AG04450 (cell line): ENCODE measurements at regions of chr5 and their contacts with region 1.

Region 1: DNA sequence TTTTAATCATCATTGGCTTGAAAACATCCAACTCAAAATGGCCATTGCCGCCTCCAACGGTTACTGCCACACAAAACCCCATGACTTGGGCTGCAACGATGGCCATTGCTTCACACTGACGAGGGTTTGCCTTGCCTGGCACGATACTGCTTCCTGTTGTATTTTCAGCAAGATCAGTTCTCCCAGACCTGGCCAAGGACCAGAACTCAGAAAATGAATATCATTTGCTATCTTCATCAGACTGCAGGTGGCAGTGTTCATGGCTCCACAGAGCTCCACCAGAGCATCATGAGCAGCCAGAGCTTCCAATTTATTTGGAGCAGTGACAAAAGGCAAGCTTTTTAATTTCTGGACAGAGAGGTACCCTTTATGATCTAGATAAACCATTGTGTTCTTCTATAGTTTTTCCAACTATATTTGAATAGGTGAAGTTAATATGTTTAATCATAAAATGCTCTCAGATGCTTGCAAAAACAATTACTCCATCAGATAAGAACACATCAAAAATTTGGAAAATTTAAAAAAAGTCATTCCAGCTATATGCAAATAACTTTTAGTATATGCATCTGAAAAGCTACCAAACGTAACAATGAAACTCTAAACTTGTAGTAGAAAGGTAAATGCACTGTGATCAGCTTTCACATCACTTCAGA is 10.4 kb downstream of the AMACR start:
- DNase-seq: peak; percentile 65
- H3K4me3 ChIP-seq: no peak overlapping the region
- H3K27ac ChIP-seq: no peak overlapping the region
- H3K27me3 ChIP-seq: no peaks in the 10 kb centered on the region
- CTCF ChIP-seq: peak; percentile 81

Region 2: GRCh38 chr5:33556330-33557328 is 440.8 kb before region 1 on chr5:
- CTCF ChIA-PET with region 1: no interaction called
- POLR2A ChIA-PET with region 1: no interaction called
- DNase-seq: no peak
- H3K4me3 ChIP-seq: no peak overlapping the region
- H3K27ac ChIP-seq: no peak overlapping the region
- H3K27me3 ChIP-seq: no peaks in the 10 kb centered on the region
- CTCF ChIP-seq: no peak

Region 3: DNA sequence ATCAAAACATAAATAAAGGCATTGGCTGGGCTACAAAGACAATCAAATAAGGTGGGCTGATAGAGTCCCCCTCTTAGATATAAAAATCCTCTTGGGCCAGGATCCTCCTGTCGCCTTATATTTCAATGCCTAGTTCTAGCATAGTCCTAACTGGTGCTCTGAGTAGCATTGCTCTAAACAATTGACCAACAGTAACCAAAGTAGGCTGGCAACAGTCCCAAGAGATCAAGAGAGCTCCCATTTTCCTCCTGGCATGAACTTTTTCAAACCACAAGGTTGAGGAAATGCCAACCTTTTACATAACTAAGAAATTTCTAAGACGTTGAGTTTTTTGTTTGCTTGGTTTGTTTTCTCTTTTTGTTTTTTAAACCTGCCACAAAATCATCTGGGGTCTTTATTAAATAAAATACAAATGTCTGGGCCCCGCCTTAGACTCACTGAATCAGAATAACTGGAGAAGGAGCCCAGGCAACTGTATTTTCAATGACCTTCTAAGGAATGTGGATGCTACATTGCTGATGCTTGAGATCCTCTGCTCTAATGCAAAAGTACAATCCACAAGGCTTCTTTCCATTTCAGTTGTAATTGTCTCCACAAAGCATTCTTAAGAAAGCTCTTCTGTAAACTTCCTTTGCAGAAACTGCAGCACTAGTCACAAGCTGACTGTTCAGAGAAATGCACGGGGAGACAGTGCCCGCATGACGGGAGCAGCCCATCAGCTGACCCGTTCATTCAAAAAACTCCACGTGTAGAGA is 15.9 kb before region 1 on chr5:
- CTCF ChIA-PET with region 1: interaction called, 13 read pairs
- POLR2A ChIA-PET with region 1: no interaction called
- DNase-seq: no peak
- H3K4me3 ChIP-seq: no peak overlapping the region
- H3K27ac ChIP-seq: no peak overlapping the region
- H3K27me3 ChIP-seq: no peaks in the 10 kb centered on the region
- CTCF ChIP-seq: no peak

Region 4: DNA sequence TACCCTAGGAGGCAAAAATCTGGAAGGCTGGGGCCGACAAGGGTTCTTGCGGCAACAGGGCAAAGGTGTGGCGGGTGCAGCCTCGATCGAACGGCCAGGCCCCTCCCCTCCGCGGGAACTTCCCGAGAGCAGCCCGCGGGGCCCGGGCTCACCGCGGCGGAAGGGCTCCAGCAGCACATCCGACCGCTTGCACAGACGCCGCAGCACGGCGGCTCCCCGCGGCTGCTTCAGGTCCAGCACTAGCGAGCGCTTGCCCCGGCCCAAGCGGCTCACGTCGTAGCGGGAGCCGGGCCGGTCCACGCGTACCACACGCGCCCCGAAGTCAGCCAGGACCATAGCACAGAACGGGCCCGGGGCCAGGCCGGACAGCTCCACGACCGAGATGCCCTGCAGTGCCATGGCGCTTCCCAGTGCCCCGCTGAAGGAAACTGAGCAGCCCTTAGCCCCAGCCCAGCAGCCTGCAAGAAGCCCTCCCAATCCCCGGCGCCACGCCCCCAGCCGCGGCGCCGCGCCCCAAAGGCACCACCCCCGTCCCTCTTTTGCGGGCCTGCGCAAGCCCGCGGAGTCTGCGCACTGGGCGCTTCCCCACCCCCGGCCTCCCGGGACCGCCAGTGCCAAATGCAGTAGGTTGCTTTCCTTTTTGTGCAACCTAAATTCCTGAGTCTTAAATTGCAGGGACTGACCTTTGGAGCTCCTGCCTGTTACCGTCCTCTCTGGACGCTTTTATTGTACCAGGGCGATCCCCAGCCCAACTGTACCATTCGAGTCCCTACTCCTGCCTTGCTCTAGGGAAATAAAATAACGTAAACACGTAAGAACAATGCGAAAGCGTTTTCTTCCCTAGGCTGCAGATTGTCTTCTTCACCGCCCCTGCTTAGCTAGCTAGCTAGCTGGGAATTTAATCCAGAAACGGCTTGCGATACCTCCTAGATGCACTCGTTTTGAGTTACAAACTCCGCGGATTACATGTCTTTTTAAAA is 10.5 kb after region 1 on chr5 and contains the start of gene AMACR:
- CTCF ChIA-PET with region 1: interaction called, 18 read pairs
- POLR2A ChIA-PET with region 1: interaction called, 4 read pairs
- DNase-seq: peak; percentile 72
- H3K4me3 ChIP-seq: peak within 1 kb of the TSS; percentile 77
- H3K27ac ChIP-seq: peak within 1 kb of the TSS; percentile 88
- H3K27me3 ChIP-seq: no peaks in the 10 kb centered on the region
- CTCF ChIP-seq: 0 out of 2 replicates have a peak, but pooled peaks have one; percentile 12
- polyA plus RNA-seq, gene AMACR: 8.0 and 10.0 TPM in 2 replicates

Region 5: GRCh38 chr5:34062419-34062818 is 65.0 kb after region 1 on chr5:
- CTCF ChIA-PET with region 1: no interaction called
- POLR2A ChIA-PET with region 1: no interaction called
- DNase-seq: no peak
- H3K4me3 ChIP-seq: no peak overlapping the region
- H3K27ac ChIP-seq: no peak overlapping the region
- H3K27me3 ChIP-seq: no peaks in the 10 kb centered on the region
- CTCF ChIP-seq: no peak

Region 6: GRCh38 chr5:34452170-34452830 is 454.8 kb after region 1 on chr5:
- CTCF ChIA-PET with region 1: interaction called, 44 read pairs
- POLR2A ChIA-PET with region 1: no interaction called
- DNase-seq: peak; percentile 10
- H3K4me3 ChIP-seq: no peak overlapping the region
- H3K27ac ChIP-seq: no peak overlapping the region
- H3K27me3 ChIP-seq: peaks cover 18% of the 10 kb centered on the region
- CTCF ChIP-seq: peak; percentile 70

Region 7: DNA sequence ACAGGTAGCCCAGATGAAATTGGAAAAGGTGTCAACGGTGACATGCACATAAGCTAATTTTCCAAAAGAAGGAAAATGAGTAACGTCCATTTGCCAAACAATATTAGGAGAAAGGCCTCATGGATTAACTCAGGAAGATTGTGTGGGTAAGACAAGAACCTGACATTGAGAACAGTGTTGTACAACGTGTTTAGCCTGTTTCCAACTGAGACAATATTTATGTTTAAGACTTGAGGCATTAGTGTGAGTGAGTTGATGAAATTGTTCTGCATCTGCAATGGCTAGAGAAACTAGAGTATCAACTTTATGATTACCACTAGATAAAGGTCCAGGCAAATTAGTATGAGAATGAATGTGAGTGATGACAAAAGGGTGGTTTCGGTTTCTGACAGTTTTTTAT is 467.4 kb after region 1 on chr5:
- CTCF ChIA-PET with region 1: interaction called, 15 read pairs
- POLR2A ChIA-PET with region 1: no interaction called
- DNase-seq: no peak
- H3K4me3 ChIP-seq: no peak overlapping the region
- H3K27ac ChIP-seq: no peak overlapping the region
- H3K27me3 ChIP-seq: no peaks in the 10 kb centered on the region
- CTCF ChIP-seq: no peak